ENCODE measurements at regions of chr21 and their contacts with region 1.

Region 1: DNA sequence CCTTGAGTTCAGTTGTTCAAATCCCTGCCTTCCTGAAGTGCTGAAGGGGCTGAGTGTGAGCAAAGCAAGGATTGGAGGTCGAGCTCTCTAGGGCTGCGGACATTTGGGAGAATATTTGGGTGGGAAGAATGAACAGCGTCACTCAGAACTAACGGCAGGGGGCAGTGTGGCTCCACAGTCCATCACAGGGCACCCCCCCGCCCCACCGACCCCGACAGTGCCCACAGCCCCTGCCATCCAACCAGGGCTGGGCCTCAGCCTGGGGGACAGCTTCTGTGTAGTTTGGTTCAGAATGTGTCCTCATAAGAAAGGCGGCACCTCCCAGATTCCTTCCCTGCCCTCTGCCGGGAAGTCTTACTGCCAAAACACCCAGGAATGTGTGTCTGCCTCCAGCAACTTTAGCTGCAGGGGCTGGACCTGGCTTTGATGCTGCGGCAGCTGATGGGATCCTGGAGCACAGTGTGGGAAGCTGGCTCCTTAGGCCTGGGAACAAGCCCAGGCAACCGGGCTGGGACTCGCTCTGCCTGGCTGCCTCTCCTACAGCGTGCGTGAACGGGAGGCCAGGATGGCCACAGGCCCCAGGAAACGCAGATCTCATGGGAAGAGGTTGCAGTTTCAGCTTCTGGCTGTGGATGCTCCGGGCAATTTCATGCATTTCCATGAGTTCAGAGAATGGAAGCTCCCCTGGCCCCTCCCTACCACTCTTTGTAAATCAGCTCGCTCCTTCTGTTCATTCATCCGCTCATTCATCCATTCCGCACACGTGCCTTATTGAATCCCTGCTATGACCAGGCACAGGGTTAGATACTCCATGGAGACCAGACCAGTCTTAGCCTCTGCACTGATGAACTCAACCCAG is 104.9 kb upstream of the TMPRSS2 start:
- DNase-seq: no peak
- ATAC-seq: no peak
- H3K4me3 Mint-ChIP-seq: no peak overlapping the region
- H3K27ac Mint-ChIP-seq: no peak overlapping the region
- H3K4me1 Mint-ChIP-seq: no peaks in the 10 kb centered on the region
- H3K27me3 Mint-ChIP-seq: peaks cover 22% of the 10 kb centered on the region
- CTCF ChIP-seq: no peak

Region 2: DNA sequence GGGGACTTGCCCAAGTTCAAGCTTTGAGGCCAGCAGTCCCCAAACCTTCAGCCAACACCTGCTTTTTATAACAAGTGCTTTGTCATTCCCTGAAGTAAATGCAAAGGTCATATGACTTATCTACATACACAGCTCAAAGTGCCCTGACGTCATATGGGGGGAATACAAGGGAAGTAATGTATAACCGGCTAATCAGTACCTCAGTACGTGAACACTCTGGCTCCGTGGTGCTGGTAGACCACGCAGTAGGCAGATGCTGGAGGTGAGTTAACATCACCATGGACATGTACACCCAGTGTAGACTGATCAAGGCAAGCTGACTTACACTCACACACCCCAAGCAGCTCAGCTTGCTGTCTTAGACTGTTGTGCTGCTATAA is 384.9 kb before region 1 on chr21:
- CTCF ChIA-PET with region 1: no interaction called
- POLR2A ChIA-PET with region 1: no interaction called
- intact Hi-C with region 1: no loop called
- DNase-seq: no peak
- ATAC-seq: no peak
- H3K4me3 Mint-ChIP-seq: peak overlapping the region; percentile 59
- H3K27ac Mint-ChIP-seq: peak overlapping the region; percentile 91
- H3K4me1 Mint-ChIP-seq: peaks cover 69% of the 10 kb centered on the region
- H3K27me3 Mint-ChIP-seq: no peaks in the 10 kb centered on the region
- CTCF ChIP-seq: no peak

Region 3: GRCh38 chr21:41583274-41583790 is 29.6 kb before region 1 on chr21:
- CTCF ChIA-PET with region 1: no interaction called
- POLR2A ChIA-PET with region 1: no interaction called
- intact Hi-C with region 1: no loop called
- DNase-seq: no peak
- ATAC-seq: no peak
- H3K4me3 Mint-ChIP-seq: no peak overlapping the region
- H3K27ac Mint-ChIP-seq: no peak overlapping the region
- H3K4me1 Mint-ChIP-seq: no peaks in the 10 kb centered on the region
- H3K27me3 Mint-ChIP-seq: peaks cover 6% of the 10 kb centered on the region
- CTCF ChIP-seq: no peak

Region 4: DNA sequence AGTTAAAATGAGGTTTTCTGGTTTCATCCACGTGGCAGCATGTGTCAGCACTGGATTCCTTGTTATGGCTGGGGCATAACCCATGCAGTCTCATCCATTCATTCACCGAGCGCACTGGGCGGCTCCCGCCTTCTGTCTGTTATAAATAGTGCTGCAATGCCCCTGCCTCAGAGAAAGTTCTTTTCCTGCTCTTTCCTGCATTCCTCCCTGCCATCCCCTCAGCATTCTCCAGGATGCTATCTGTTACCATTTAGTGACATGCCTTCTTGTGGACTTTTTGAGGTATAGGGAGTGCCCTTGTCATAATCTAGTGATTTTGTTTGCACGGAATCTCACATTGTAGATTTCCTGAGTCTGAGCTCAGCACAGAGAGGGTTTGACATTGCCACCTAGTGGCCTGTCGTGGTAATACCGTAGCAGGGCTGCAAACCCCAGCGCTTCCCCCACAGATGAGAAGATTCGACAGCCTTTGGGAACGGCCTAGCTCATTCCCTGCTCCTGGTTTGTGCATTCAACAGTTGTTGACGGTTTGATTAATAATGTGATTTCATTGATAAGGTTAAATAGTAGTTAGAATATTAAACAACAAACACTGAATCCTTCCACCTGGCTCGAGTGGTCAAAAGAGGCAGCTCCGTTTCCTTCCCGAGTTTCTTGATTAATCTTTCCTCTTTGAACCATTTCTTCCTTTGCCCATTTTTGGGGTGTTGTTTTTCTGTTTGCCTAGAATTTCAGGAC is 504.5 kb after region 1 on chr21:
- CTCF ChIA-PET with region 1: no interaction called
- POLR2A ChIA-PET with region 1: no interaction called
- intact Hi-C with region 1: loop called (anchors 2 kb)
- DNase-seq: peak; percentile 61
- ATAC-seq: peak; percentile 85
- H3K4me3 Mint-ChIP-seq: peak overlapping the region; percentile 37
- H3K27ac Mint-ChIP-seq: no peak overlapping the region
- H3K4me1 Mint-ChIP-seq: peaks cover 48% of the 10 kb centered on the region
- H3K27me3 Mint-ChIP-seq: peaks cover 16% of the 10 kb centered on the region
- CTCF ChIP-seq: peak; percentile 70

Measured in activated B cell treated with CpG ODN at 0.5 μM for 24 hours (primary cell).